ENCODE measurements at regions of chr16 and their contacts with region 1.

Region 1: DNA sequence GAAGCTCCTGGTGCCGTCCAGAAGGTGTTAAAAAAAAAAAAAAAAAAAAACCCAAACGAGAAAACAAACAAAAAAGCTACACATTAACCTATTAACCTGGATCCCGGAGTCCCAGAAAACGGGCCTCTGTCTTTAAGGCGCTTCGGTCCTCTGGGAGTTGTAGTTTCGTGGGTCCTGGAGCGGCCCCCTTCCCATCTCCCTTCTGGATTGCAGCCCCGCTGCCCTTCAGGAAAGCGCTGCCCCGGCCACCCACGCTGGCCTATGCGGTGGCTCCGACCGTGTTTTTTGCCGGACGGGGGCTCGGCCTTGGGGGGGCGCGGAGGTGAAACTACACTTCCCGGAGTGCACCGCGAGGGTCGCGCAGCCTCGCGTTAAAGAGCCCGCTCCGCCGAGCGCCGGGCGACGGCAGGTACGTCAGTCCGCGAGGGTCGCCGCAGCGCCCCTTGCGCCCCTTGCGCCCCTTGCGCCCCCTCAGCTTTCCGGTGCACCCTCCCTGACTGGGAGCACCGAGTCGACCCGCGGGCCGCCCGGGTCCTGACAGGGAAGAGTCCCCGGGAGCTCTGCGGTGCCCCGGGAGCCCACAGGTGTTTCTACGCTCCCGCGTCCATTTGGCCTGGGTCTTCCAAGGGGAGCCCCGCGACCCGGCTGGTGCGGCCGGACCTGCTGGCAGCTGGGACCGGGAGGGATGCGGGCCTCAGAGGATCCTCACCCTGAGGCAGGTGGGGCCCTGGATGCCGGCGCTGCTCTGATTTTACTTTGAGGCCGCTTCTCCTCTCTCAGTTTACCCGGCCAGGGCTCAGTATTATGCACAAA is at the start of gene FCSK:
- DNase-seq: peak; percentile 38 to 57 (median 52)
- H3K4me3 ChIP-seq: peak within 1 kb of the TSS; percentile 64 to 89 (median 84)
- H3K4me3 Mint-ChIP-seq: peak within 1 kb of the TSS; percentile 80 to 90
- H3K27ac ChIP-seq: peak within 1 kb of the TSS; percentile 65 to 94
- H3K27ac Mint-ChIP-seq: peak within 1 kb of the TSS; percentile 85 to 98 (median 94)
- H3K4me1 ChIP-seq: peaks cover 11 to 19% of the 10 kb centered on the region in 2 donors
- H3K4me1 Mint-ChIP-seq: peaks cover 24% of the 10 kb centered on the region
- H3K27me3 ChIP-seq: peaks cover 0 to 11% of the 10 kb centered on the region in 2 donors
- H3K27me3 Mint-ChIP-seq: peaks cover 7 to 25% (median 12%) of the 10 kb centered on the region in 3 donors
- CTCF ChIP-seq: no peak
- polyA plus RNA-seq, gene FCSK: 4.2 to 19.0 (median 6.4) TPM

Region 2: DNA sequence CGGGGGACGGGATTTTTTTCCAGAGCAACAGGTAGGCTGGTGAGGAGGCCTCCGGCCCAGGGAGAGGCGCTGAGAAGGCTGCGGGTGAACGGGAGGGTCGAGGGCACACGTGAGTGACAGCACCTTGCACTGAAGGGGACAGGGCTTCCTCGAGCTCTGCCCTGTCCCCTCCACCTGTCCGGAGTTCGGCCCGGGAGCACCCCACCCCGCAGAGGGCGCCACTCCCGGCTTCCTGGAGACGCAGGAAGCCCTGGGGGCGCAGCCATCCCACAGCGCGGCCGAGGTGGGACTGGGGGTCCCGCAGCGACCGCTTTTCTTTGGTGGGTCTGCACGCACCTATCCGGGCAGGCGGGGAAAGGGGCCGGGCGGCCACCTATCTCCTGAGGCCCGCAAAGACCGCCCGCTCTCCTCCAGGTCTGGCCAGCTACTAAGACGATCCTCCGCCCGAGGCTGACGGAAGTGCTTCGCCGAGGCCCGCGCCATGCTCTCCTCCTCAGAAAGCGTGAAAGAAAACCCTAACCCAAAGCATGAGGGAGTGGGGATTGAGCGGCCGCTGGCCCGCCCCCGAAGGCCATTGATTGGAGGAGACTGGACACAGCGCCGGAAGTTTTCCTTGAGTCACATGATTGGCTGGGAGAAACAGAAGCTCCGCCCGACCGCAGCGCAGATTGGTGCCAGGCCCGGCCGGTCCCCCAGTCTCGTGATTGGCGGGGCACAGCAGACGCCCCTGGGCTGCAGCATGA is 73.4 kb before region 1 on chr16:
- intact Hi-C with region 1: loop called in 1 of 2 experiments (anchors 5 kb)
- DNase-seq: peak; percentile 93 to 97 (median 95)
- H3K4me3 ChIP-seq: peak overlapping the region; percentile 42 to 84 (median 72)
- H3K4me3 Mint-ChIP-seq: peak overlapping the region; percentile 89 to 97
- H3K27ac ChIP-seq: peak overlapping the region; percentile 50 to 72
- H3K27ac Mint-ChIP-seq: peak overlapping the region; percentile 60 to 93 (median 88)
- H3K4me1 ChIP-seq: peaks cover 23 to 30% of the 10 kb centered on the region in 2 donors
- H3K4me1 Mint-ChIP-seq: peaks cover 25% of the 10 kb centered on the region
- H3K27me3 ChIP-seq: no peaks in the 10 kb centered on the region
- H3K27me3 Mint-ChIP-seq: peaks cover 0 to 3% (median 1%) of the 10 kb centered on the region in 3 donors
- CTCF ChIP-seq: peak; percentile 29

Region 3: DNA sequence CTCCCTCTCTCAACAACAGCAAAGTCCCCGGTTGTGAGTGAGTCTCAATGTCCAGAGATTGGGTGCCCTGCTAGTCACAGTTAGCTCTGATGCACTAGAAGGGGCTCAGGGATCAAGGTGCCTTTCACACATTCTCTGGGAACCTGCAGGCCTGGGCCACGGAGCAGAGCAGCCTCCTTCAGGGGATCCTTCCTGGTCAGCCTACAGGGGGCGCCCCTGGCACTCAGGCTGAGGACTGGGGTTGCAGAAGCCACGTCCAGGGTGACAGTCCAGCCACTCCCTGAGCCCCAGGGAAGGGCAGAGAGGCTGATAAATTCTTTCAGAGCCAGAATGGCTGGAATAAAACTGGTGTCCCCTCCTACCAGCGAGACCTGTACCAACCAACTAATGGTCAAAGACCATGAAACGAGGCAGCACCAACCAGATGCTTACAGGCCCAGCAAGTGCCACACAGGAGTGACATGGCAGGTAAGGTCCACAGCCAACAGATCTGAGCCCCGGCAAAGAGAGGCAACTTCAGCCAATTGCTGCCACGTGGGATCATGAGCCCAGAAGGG is 59.0 kb before region 1 on chr16:
- intact Hi-C with region 1: loop called (anchors 2 to 5 kb)
- DNase-seq: peak; percentile 61 to 72 (median 68)
- H3K4me3 ChIP-seq: no peak overlapping the region
- H3K4me3 Mint-ChIP-seq: no peak overlapping the region
- H3K27ac ChIP-seq: no peak overlapping the region
- H3K27ac Mint-ChIP-seq: peak overlapping the region in 1 of 7 donors; percentile 58
- H3K4me1 ChIP-seq: peaks cover 0 to 4% of the 10 kb centered on the region in 2 donors
- H3K4me1 Mint-ChIP-seq: peaks cover 4% of the 10 kb centered on the region
- H3K27me3 ChIP-seq: no peaks in the 10 kb centered on the region
- H3K27me3 Mint-ChIP-seq: peaks cover 0 to 2% (median 2%) of the 10 kb centered on the region in 3 donors
- CTCF ChIP-seq: peak; percentile 83

Region 4: GRCh38 chr16:70402916-70403659 is 51.3 kb before region 1 on chr16:
- intact Hi-C with region 1: loop called (anchors 2 to 5 kb)
- DNase-seq: peak in 2 of 3 donors; percentile 42 to 49
- H3K4me3 ChIP-seq: no peak overlapping the region
- H3K4me3 Mint-ChIP-seq: peak overlapping the region; percentile 34 to 53
- H3K27ac ChIP-seq: no peak overlapping the region
- H3K27ac Mint-ChIP-seq: peak overlapping the region; percentile 87 to 96 (median 92)
- H3K4me1 ChIP-seq: peaks cover 32 to 39% of the 10 kb centered on the region in 2 donors
- H3K4me1 Mint-ChIP-seq: peaks cover 45% of the 10 kb centered on the region
- H3K27me3 ChIP-seq: no peaks in the 10 kb centered on the region
- H3K27me3 Mint-ChIP-seq: peaks cover 2 to 5% (median 5%) of the 10 kb centered on the region in 3 donors
- CTCF ChIP-seq: no peak

Region 5: GRCh38 chr16:70418274-70418992 is 36.0 kb before region 1 on chr16:
- intact Hi-C with region 1: no loop called
- DNase-seq: no peak
- H3K4me3 ChIP-seq: no peak overlapping the region
- H3K4me3 Mint-ChIP-seq: no peak overlapping the region
- H3K27ac ChIP-seq: no peak overlapping the region
- H3K27ac Mint-ChIP-seq: peak overlapping the region in 2 of 7 donors; percentile 13 to 17
- H3K4me1 ChIP-seq: peaks cover 23 to 44% of the 10 kb centered on the region in 2 donors
- H3K4me1 Mint-ChIP-seq: peaks cover 42% of the 10 kb centered on the region
- H3K27me3 ChIP-seq: no peaks in the 10 kb centered on the region
- H3K27me3 Mint-ChIP-seq: peaks cover 0 to 4% (median 0%) of the 10 kb centered on the region in 3 donors
- CTCF ChIP-seq: no peak

Region 6: GRCh38 chr16:70523076-70523742 is 68.8 kb after region 1 on chr16 and contains the start of gene COG4:
- intact Hi-C with region 1: loop called in 1 of 2 experiments (anchors 10 kb)
- DNase-seq: peak; percentile 85 to 88 (median 86)
- H3K4me3 ChIP-seq: peak within 1 kb of the TSS; percentile 84 to 99 (median 96)
- H3K4me3 Mint-ChIP-seq: peak within 1 kb of the TSS; percentile 96 to 99
- H3K27ac ChIP-seq: peak within 1 kb of the TSS; percentile 81 to 97
- H3K27ac Mint-ChIP-seq: peak within 1 kb of the TSS; percentile 94 to 99 (median 97)
- H3K4me1 ChIP-seq: peaks cover 34 to 50% of the 10 kb centered on the region in 2 donors
- H3K4me1 Mint-ChIP-seq: peaks cover 48% of the 10 kb centered on the region
- H3K27me3 ChIP-seq: no peaks in the 10 kb centered on the region
- H3K27me3 Mint-ChIP-seq: peaks cover 0 to 4% (median 1%) of the 10 kb centered on the region in 3 donors
- CTCF ChIP-seq: no peak
- polyA plus RNA-seq, gene COG4: 37.6 to 40.6 (median 40.1) TPM